Posterior cingulate gyrus (tissue), 11 donors: ENCODE measurements at regions of chr3 and their contacts with region 1.

Region 1: DNA sequence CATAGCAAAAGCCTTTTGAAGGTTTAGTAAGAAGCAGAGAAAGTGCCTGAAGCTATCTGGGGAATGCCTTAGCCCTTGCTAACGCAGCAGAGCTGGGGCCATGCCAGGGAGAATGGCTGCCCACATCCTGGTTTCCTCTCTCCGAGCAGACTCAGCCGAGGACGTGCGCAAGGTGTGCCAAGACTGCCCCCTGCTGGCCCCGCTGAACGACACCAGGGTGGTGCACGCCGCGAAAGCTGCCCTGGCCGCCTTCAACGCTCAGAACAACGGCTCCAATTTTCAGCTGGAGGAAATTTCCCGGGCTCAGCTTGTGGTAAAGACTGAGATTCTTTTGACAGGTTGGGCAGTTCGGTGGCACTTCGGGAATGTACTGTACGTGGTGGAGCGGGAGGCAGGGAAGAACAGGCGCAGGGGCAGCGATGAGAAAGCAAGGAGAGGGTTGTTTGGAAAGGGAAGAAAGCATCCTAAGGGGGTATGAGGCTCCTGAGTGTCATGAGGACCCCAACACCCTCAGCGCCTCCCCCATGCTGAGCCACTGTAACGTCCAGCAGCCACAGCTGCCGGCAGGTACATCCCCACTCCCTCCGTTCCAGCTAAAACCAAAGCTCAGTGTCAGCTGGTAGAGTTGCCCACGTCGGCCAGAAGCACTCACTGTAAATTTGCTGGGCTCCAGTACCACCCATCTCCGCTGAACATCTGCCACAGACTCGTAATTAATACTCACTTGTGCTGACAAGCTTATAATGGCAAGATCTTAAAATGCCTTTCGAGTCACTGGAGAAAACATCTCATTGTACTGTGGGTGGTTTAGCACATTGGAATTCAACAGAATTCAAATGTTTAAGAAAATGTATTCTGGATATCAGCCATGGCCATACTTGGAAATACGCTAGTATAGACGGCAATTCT is 4.4 kb downstream of the AHSG start:
- DNase-seq: peak; percentile 72 to 97 (median 84)

Region 2: DNA sequence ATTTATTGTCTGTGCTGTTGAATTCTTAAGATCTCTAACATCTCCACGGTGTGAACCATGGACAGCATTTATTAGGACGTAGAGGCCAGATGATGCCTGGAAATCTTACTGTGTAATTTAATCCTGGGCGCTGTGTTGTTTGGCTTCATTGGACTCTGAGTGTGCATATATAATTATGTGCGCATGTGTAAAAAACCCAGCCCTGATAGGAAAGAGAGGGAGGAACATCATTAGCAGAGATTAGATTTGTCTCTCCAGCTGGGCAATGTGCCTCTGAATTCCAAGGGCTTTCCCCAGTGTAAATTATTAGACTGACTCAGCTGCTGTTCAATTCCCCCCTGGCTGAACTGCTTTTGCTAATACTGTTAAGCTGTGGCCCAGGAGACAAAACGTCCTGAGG is 1214.7 kb before region 1 on chr3:
- intact Hi-C with region 1: no loop called
- DNase-seq: no peak

Region 3: DNA sequence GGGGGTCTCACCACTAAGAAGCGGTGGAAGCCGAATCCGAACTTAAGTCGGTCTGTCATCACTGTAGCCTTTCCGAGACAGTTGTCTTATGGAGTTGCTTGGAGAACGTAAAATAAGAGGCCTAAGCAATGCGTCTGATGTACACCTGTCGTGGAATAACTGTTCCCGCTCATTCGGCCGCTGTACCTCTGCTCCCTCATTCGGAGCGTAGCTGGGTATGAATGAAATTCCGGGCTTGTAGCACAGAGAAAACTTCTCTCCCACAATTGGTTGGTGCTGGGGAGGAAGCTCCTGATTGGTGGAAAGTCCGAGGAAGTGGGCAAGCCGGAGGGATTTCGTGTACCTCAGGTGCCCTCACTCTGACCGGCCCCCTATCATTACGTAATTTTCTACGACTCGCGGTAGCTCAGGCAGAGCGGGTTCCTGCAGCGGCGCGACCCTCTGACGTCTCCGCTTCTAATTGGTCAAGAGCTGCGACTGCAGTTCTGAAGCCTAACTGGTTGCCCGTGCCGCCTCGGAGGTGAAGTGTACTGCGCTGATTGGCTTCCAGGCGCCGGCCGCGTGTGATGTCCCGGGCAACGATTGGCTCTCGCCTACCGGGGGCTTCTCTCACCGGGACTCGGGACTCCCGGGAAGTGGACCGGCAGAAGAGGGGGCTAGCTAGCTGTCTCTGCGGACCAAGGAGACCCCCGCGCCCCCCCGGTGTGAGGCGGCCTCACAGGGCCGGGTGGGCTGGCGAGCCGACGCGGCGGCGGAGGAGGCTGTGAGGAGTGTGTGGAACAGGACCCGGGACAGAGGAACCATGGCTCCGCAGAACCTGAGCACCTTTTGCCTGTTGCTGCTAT is 47.0 kb before region 1 on chr3 and contains the start of gene DNAJB11:
- intact Hi-C with region 1: loop called (anchors 5 kb)
- DNase-seq: peak; percentile 99 to 100 (median 100)

Region 4: GRCh38 chr3:186783073-186783730 is 165.9 kb after region 1 on chr3 and contains the start of gene EIF4A2:
- intact Hi-C with region 1: loop called (anchors 5 kb)
- DNase-seq: peak; percentile 80 to 98 (median 86)

Region 5: GRCh38 chr3:186821429-186822367 is 204.4 kb after region 1 on chr3:
- intact Hi-C with region 1: loop called (anchors 1 kb)
- DNase-seq: no peak